Activated B cell treated with CpG ODN at 0.5 μM for 24 hours (primary cell): ENCODE measurements at regions of chr19 and their contacts with region 1.

Region 1: DNA sequence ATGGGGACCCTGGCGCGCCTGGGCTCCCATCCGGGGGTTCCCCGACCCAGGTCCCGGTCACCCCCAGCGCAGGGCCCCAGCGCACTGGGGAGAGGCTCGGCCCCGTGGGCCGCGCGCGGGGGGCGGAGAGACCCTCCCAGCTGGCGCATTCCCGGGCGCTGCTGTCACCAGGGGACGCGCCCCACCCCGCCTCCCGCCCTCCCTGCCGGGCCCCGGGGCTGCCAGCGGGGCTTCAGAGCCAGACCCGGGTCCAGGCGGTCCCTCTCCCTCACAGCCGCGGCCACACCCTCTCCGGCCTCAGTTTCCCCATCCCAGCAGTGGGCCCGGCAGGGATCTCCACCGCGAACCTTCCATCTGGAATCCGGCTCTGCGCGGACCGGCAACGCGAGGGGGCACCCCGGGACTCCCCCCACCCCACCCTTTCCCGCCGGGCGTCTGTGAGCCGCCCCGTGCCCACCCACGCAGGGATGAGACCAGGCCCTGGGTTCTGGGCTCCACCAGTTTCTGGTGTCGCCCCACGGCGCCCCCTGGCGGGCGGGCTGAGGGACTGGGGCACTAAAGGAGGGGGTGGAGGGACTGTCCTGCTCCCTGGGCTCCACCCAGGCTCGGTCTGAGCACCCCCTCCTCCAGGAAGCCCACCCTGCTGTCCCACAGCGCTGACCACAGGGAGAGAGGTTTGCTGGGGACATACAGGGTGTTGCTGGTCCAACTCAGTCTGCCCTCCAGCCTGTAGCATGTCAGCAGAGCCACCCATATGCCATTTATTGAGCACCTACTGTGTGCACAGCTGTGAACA is 878 bp upstream of the ADAMTSL5 start:
- DNase-seq: peak; percentile 51
- ATAC-seq: peak; percentile 57
- H3K4me3 Mint-ChIP-seq: no peak overlapping the region
- H3K27ac Mint-ChIP-seq: no peak overlapping the region
- H3K4me1 Mint-ChIP-seq: peaks cover 5% of the 10 kb centered on the region
- H3K27me3 Mint-ChIP-seq: peaks cover 43% of the 10 kb centered on the region
- CTCF ChIP-seq: no peak

Region 2: DNA sequence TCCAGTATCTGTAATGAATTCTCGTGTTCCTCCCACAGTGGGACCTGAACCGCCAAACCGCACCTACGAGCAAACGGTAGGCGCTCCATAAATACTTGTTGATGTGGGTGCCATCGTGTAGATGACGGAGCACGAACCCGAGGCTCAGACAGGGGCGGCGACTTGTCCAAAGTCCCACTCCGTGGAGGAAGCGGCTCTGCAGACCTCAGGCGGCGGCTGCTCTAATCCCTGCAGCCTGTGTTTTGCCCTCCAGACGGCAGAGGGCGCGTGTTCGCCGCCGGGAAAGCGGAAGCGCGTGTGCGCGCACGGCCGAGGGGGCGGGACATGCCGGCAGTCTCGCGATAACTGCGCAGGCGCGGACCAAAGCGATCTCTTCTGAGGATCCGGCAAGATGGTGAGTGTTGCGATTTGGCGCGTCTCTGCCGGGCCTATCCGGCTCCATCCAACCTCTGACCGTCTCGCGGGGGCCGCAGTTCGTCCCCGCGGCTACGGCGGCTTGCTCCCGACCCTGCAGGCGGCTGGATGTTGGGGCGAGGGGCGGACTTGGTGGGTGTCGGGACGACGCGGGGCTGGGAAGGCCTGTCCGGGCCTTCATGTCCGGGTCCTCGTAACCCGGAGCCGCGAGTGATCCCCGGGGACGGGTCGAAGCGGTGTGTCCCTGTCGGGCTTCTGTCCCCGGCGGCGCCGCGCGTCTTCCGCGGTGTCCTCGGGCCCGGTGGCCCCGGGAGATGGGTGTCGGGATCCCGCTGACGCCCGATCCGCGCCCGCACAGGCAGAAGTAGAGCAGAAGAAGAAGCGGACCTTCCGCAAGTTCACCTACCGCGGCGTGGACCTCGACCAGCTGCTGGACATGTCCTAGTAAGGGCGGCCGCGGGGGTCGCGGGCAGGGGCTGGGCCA is 75.4 kb before region 1 on chr19 and contains the start of gene RPS15:
- CTCF ChIA-PET with region 1: no interaction called
- POLR2A ChIA-PET with region 1: no interaction called
- intact Hi-C with region 1: loop called (anchors 2 kb)
- DNase-seq: peak; percentile 94
- ATAC-seq: peak; percentile 92
- H3K4me3 Mint-ChIP-seq: peak within 1 kb of the TSS; percentile 99
- H3K27ac Mint-ChIP-seq: peak within 1 kb of the TSS; percentile 99
- H3K4me1 Mint-ChIP-seq: peaks cover 26% of the 10 kb centered on the region
- H3K27me3 Mint-ChIP-seq: no peaks in the 10 kb centered on the region
- CTCF ChIP-seq: no peak
- total RNA-seq, gene RPS15: 1,788 and 2,029 TPM in 2 replicates

Region 3: DNA sequence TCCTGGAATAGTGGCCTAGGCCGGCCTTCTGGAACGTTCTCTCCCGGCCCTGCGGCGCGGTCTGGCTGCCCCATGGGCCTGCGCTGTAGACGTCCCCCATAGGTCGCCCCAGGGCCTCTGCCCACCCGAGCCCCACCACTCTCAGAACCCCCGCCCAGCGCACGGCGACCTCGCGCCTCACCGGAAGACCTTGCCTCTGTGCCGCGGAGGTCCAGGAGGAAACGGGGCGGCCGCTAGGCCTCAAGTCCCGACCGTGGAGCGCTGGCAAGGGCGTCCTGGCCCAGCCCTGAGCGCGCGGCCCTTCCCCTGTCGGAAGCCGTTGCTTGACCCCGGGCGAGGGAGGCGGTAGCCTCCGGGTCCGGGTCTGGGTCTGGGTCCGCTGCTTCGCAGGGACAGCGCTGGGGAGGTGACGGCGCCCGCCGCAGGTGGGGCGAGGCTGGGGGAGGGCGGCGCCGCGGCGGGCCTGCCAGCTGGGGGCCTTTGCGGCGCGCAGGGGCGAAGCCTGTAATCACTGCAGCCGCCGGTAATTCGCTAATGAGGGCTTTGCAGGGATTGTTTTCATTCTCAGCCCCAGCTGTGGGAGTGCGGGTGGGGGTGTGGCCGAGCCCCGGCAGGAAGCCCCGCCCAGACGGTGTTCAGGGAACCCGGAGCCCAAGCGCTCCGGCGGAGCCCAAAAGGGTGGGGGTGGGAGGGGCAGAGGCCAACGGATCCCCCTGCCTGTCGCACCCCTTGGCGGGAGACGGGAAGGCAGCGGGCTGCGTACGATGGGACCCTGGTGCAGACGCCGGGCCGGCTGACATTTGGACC is 43.3 kb before region 1 on chr19:
- CTCF ChIA-PET with region 1: no interaction called
- POLR2A ChIA-PET with region 1: no interaction called
- intact Hi-C with region 1: loop called (anchors 2 kb)
- DNase-seq: peak; percentile 57
- ATAC-seq: peak; percentile 69
- H3K4me3 Mint-ChIP-seq: peak overlapping the region; percentile 76
- H3K27ac Mint-ChIP-seq: no peak overlapping the region
- H3K4me1 Mint-ChIP-seq: peaks cover 25% of the 10 kb centered on the region
- H3K27me3 Mint-ChIP-seq: peaks cover 2% of the 10 kb centered on the region
- CTCF ChIP-seq: no peak

Region 4: GRCh38 chr19:1555487-1556389 is 42.0 kb after region 1 on chr19:
- CTCF ChIA-PET with region 1: no interaction called
- POLR2A ChIA-PET with region 1: no interaction called
- intact Hi-C with region 1: loop called (anchors 2 kb)
- DNase-seq: no peak
- ATAC-seq: no peak
- H3K4me3 Mint-ChIP-seq: no peak overlapping the region
- H3K27ac Mint-ChIP-seq: no peak overlapping the region
- H3K4me1 Mint-ChIP-seq: no peaks in the 10 kb centered on the region
- H3K27me3 Mint-ChIP-seq: peaks cover 8% of the 10 kb centered on the region
- CTCF ChIP-seq: no peak